ENCODE measurements at regions of chr17 and their contacts with region 1.

Region 1: GRCh38 chr17:44199553-44200477 is at the start of gene ATXN7L3:
- DNase-seq: peak; percentile 100
- ATAC-seq: peak; percentile 85
- H3K4me3 Mint-ChIP-seq: peak within 1 kb of the TSS; percentile 89
- H3K27ac Mint-ChIP-seq: peak within 1 kb of the TSS; percentile 97
- H3K4me1 Mint-ChIP-seq: peaks cover 38% of the 10 kb centered on the region
- H3K27me3 Mint-ChIP-seq: no peaks in the 10 kb centered on the region
- CTCF ChIP-seq: no peak
- total RNA-seq, gene ATXN7L3: 58.1 to 62.3 TPM

Region 2: GRCh38 chr17:44344939-44345453 is 145.2 kb after region 1 on chr17 and contains the start of gene GRN:
- CTCF ChIA-PET with region 1: interaction called, 28 read pairs
- POLR2A ChIA-PET with region 1: interaction called, 4 read pairs
- intact Hi-C with region 1: loop called (anchors 5 kb)
- DNase-seq: peak; percentile 95
- ATAC-seq: peak; percentile 99
- H3K4me3 Mint-ChIP-seq: peak within 1 kb of the TSS; percentile 93
- H3K27ac Mint-ChIP-seq: peak within 1 kb of the TSS; percentile 81
- H3K4me1 Mint-ChIP-seq: peaks cover 19% of the 10 kb centered on the region
- H3K27me3 Mint-ChIP-seq: no peaks in the 10 kb centered on the region
- CTCF ChIP-seq: no peak
- total RNA-seq, gene GRN: 34.8 to 35.5 TPM

Region 3: GRCh38 chr17:44350733-44351226 is 151.0 kb after region 1 on chr17:
- CTCF ChIA-PET with region 1: interaction called, 28 read pairs
- POLR2A ChIA-PET with region 1: interaction called, 4 read pairs
- intact Hi-C with region 1: loop called (anchors 5 kb)
- DNase-seq: peak; percentile 86
- ATAC-seq: peak; percentile 90
- H3K4me3 Mint-ChIP-seq: no peak overlapping the region
- H3K27ac Mint-ChIP-seq: no peak overlapping the region
- H3K4me1 Mint-ChIP-seq: peaks cover 11% of the 10 kb centered on the region
- H3K27me3 Mint-ChIP-seq: no peaks in the 10 kb centered on the region
- CTCF ChIP-seq: peak; percentile 80